ENCODE measurements at regions of chr4 and their contacts with region 1.

Region 1: GRCh38 chr4:705278-706082 is at the start of gene PCGF3:
- DNase-seq: peak; percentile 99
- ATAC-seq: peak; percentile 99
- H3K4me3 Mint-ChIP-seq: peak within 1 kb of the TSS; percentile 68
- H3K27ac Mint-ChIP-seq: no peak within 1 kb of the TSS
- H3K4me1 Mint-ChIP-seq: peaks cover 15% of the 10 kb centered on the region
- H3K27me3 Mint-ChIP-seq: no peaks in the 10 kb centered on the region
- total RNA-seq, gene PCGF3: 20.6 to 22.5 TPM

Region 2: GRCh38 chr4:498328-498904 is 207.1 kb before region 1 on chr4:
- CTCF ChIA-PET with region 1: no interaction called
- POLR2A ChIA-PET with region 1: no interaction called
- intact Hi-C with region 1: loop called in 1 of 2 experiments (anchors 1 kb)
- DNase-seq: no peak
- ATAC-seq: peak; percentile 23
- H3K4me3 Mint-ChIP-seq: peak overlapping the region; percentile 94
- H3K27ac Mint-ChIP-seq: peak overlapping the region; percentile 97
- H3K4me1 Mint-ChIP-seq: peaks cover 33% of the 10 kb centered on the region
- H3K27me3 Mint-ChIP-seq: no peaks in the 10 kb centered on the region

Region 3: DNA sequence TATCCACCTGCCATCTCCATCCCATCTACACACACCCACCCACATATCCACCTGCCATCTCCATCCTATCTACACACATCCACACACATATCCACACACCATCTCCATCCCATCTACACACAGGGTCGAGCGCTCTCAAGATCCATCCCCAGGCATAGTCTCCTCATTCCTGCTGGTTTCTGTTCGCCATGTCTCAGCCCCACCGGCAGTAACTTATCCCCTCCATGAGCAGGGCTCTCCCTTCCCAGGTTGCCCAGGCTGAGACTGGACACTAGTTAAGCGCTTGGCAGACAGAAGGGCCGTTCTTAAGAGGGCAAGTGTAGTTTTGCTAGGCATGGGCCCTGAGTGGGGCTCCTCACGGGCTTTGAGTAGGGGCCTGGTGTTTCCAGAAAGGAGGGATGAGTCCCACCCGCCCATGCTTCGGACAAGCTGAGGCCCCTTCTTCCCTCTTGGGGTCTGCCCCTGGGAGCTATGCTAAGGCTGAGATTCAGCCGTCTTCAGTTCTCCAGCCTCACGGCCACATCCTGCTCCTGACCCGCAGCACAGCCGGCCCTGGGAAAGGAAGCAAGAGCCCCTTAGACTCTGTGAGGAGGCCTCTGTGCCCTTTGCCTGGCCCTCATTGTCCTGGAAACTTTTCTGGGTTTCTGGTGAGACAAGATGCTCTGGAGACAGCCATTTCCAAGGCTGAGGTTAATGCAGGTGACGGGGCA is 149.8 kb before region 1 on chr4:
- CTCF ChIA-PET with region 1: no interaction called
- POLR2A ChIA-PET with region 1: no interaction called
- intact Hi-C with region 1: no loop called
- DNase-seq: no peak
- ATAC-seq: no peak
- H3K4me3 Mint-ChIP-seq: no peak overlapping the region
- H3K27ac Mint-ChIP-seq: no peak overlapping the region
- H3K4me1 Mint-ChIP-seq: no peaks in the 10 kb centered on the region
- H3K27me3 Mint-ChIP-seq: peaks cover 6% of the 10 kb centered on the region

Region 4: DNA sequence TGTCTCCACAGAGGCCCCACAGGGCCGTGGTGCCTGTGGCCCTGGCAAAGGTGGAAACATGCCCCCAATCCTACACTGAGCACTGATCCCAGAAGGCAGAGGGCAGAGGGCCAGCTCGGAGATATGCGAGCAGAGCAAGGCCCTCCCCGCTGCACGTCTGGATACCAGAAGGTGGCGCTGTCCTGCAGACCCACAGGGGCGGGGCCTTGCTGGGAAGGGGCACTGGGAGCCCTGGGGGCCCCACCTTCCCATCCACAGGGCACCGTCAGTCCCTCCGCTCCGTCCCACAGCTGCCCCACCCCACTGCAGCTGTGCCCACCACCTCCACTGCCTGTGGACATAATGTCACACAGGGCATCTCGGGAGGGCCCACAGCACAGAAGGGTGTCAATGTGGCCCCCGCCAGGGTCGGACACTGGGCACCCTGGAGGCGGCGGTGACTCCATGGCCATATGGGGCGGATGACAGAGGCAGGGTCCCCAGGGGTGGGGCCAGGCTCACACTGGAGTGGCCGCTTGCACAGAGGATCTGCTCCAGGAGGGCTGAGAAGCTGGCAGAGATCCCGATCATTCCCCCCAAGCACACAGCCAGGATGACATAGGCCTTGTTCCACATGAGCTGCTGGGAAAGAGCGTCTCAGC is 21.4 kb before region 1 on chr4:
- CTCF ChIA-PET with region 1: no interaction called
- POLR2A ChIA-PET with region 1: no interaction called
- intact Hi-C with region 1: loop called in 1 of 2 experiments (anchors 1 kb)
- DNase-seq: peak; percentile 72
- ATAC-seq: peak; percentile 45
- H3K4me3 Mint-ChIP-seq: no peak overlapping the region
- H3K27ac Mint-ChIP-seq: no peak overlapping the region
- H3K4me1 Mint-ChIP-seq: peaks cover 4% of the 10 kb centered on the region
- H3K27me3 Mint-ChIP-seq: peaks cover 5% of the 10 kb centered on the region

Region 5: DNA sequence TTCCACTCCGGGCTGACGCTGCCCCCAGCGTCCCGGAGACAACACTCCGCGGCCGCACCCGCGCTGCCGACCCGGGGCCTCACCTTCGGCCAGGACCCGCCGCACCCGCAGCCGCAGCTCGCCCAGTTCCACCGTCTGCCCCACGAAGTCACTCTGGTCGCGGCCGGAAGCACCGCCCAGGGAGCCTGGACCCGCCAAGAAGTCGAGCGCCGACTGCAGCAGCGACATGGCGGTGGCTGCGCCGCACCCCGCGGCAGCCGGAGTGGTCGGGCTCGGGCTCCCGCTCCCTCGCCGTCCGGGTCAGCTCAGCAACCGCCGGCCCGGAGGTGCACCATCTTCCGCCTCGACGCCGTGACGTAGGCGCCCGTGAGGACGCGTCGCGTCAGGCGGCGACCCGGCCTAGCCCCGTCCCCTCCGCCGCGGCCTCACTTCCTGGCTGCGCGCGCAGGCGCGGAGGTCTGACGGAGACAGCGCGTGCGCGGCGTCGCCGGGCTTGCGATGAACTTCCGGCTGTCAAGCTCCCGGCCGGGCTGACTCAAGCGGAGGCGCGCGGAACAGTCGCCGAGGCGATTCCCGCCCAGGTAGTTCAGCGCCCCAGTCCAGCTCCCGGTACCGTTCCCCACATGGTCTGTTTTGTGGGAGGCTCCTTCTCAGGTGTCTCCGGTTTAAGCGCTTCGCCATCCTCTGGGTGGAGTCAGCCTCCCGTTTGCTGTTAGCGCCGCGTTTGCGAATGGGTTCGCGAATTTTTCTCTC is 226.7 kb after region 1 on chr4 and contains the starts of genes GAK and TMEM175:
- CTCF ChIA-PET with region 1: no interaction called
- POLR2A ChIA-PET with region 1: no interaction called
- intact Hi-C with region 1: loop called in 1 of 2 experiments (anchors 1 kb)
- DNase-seq: peak; percentile 98
- ATAC-seq: peak; percentile 95
- H3K4me3 Mint-ChIP-seq: peak within 1 kb of the TSS; percentile 87
- H3K27ac Mint-ChIP-seq: peak within 1 kb of the TSS; percentile 89
- H3K4me1 Mint-ChIP-seq: peaks cover 29% of the 10 kb centered on the region
- H3K27me3 Mint-ChIP-seq: no peaks in the 10 kb centered on the region
- total RNA-seq, gene GAK: 82.9 to 88.0 TPM
- total RNA-seq, gene TMEM175: 15.2 to 17.3 TPM